CD4-positive, alpha-beta memory T cell (primary cell): ENCODE measurements at regions of chr2 and their contacts with region 1.

Region 1: DNA sequence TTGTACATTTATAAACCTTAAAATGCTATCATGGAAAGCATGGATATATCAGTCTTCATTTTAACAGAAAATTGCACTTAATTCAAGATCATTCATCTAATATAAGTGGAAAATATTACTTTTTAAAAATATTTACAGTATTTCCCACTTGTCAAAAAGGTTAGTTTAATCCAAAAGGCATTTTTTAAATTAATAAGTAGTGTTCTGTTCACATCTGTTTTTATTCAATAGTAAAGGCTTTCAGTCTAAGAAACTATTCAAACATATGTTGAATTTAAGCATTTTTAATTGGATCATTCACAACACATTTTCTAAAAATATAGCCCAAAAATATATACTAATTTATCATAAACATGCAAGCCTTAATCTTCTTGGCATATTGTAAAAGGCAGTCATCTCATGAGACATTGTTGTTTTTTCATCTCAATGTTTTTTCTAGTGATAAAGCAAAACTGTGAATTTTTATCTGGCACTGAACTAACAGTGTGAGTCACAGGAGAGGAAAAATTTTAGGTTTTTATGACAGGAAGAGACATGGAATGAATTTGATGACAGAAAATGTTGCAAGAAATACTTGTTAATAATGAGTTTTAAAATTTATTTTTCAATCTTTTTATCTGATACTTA is 1642.5 kb upstream of the TMEFF2 start:
- DNase-seq: no peak
- H3K4me3 ChIP-seq: no peak overlapping the region
- H3K4me3 Mint-ChIP-seq: no peak overlapping the region
- H3K27ac ChIP-seq: no peak overlapping the region
- H3K27ac Mint-ChIP-seq: no peak overlapping the region
- H3K4me1 ChIP-seq: no peaks in the 10 kb centered on the region
- H3K4me1 Mint-ChIP-seq: no peaks in the 10 kb centered on the region
- H3K27me3 ChIP-seq: no peaks in the 10 kb centered on the region
- H3K27me3 Mint-ChIP-seq: no peaks in the 10 kb centered on the region

Region 2: DNA sequence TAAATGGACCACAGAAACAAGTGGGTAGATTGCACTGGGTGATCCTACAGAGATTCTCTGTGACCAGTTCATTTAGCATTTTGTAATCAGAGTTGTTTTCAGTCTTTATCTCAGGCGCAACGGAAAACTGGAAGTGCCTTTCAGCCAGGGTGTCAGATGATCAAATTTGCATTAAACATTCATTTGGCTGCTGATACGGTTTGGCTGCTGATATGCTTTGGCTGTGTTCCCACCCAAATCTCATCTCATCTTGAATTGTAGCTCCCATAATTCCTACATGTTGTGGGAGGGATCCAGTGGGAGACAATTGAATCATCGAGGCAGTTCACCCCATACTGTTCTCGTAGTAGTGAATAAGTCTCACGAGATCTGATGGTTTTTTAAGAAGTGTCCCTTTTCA is 246.4 kb before region 1 on chr2:
- CTCF ChIA-PET with region 1: no interaction called
- POLR2A ChIA-PET with region 1: no interaction called
- intact Hi-C with region 1: no loop called
- DNase-seq: no peak
- H3K4me3 ChIP-seq: no peak overlapping the region
- H3K4me3 Mint-ChIP-seq: peak overlapping the region in 1 of 8 donors; percentile 22
- H3K27ac ChIP-seq: no peak overlapping the region
- H3K27ac Mint-ChIP-seq: no peak overlapping the region
- H3K4me1 ChIP-seq: no peaks in the 10 kb centered on the region
- H3K4me1 Mint-ChIP-seq: no peaks in the 10 kb centered on the region
- H3K27me3 ChIP-seq: no peaks in the 10 kb centered on the region
- H3K27me3 Mint-ChIP-seq: no peaks in the 10 kb centered on the region

Region 3: GRCh38 chr2:193824474-193824873 is 12.8 kb before region 1 on chr2:
- CTCF ChIA-PET with region 1: no interaction called
- POLR2A ChIA-PET with region 1: no interaction called
- intact Hi-C with region 1: loop called (anchors 1 kb)
- DNase-seq: no peak
- H3K4me3 ChIP-seq: no peak overlapping the region
- H3K4me3 Mint-ChIP-seq: no peak overlapping the region
- H3K27ac ChIP-seq: no peak overlapping the region
- H3K27ac Mint-ChIP-seq: no peak overlapping the region
- H3K4me1 ChIP-seq: no peaks in the 10 kb centered on the region
- H3K4me1 Mint-ChIP-seq: no peaks in the 10 kb centered on the region
- H3K27me3 ChIP-seq: no peaks in the 10 kb centered on the region
- H3K27me3 Mint-ChIP-seq: no peaks in the 10 kb centered on the region